ENCODE measurements at regions of chr7 and their contacts with region 1.

Region 1: DNA sequence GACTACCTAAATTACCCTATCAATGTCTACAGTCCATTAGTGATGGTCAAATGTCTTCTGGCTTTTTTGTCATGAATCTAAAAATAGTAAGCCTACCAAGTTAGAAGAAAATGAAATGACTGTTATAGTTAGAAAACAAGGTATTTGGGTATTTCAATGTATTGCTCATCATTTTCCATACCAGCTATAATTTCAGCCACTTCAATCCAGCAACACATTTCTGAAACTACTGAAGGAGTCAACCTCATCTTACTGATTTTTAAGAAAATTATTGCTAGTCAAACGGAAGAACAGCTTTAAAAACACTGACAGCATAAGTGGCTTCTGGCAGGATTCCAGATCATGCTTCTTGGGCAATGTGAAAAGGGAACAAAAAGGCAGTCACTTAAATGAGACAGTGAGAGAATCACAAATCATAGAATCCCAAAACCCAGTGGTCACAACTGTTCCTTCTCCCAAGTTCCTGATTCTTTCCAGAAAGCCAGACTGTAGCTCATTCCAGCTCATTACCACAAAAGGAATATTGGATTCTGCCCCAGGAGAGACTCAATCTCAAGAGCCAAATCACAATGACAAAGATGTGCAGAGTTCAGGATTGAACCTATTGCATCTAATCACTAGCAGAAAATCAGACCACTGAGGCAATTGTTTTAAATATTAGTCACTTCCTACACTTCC is 61.2 kb upstream of the LRRN3 start:
- DNase-seq: peak; percentile 20
- ATAC-seq: no peak
- H3K4me3 ChIP-seq: no peak overlapping the region; a peak in 1 of 6 replicates
- H3K27ac ChIP-seq: peak overlapping the region; percentile 67
- H3K4me1 ChIP-seq: peaks cover 62% of the 10 kb centered on the region
- H3K27me3 ChIP-seq: no peaks in the 10 kb centered on the region
- CTCF ChIP-seq: no peak
- EP300 ChIP-seq: no peak
- POLR2A ChIP-seq: no peak
- RAD21 ChIP-seq: no peak

Region 2: GRCh38 chr7:109663806-109664205 is 1365.9 kb before region 1 on chr7:
- CTCF ChIA-PET with region 1: no interaction called
- POLR2A ChIA-PET with region 1: no interaction called
- in situ Hi-C with region 1: no loop called
- intact Hi-C with region 1: loop called (anchors 5 kb)
- DNase-seq: no peak
- ATAC-seq: no peak
- H3K4me3 ChIP-seq: no peak overlapping the region
- H3K27ac ChIP-seq: no peak overlapping the region
- H3K4me1 ChIP-seq: no peaks in the 10 kb centered on the region
- H3K27me3 ChIP-seq: no peaks in the 10 kb centered on the region
- CTCF ChIP-seq: no peak
- EP300 ChIP-seq: no peak
- POLR2A ChIP-seq: no peak
- RAD21 ChIP-seq: no peak

Region 3: GRCh38 chr7:110522761-110523244 is 506.9 kb before region 1 on chr7:
- CTCF ChIA-PET with region 1: no interaction called
- POLR2A ChIA-PET with region 1: no interaction called
- in situ Hi-C with region 1: no loop called
- intact Hi-C with region 1: loop called (anchors 10 kb)
- DNase-seq: peak; percentile 96
- ATAC-seq: peak; percentile 99
- H3K4me3 ChIP-seq: peak overlapping the region in 2 of 3 experiments; percentile 2 to 3; a peak in 2 of 6 replicates
- H3K27ac ChIP-seq: peak overlapping the region; percentile 84
- H3K4me1 ChIP-seq: peaks cover 36% of the 10 kb centered on the region
- H3K27me3 ChIP-seq: no peaks in the 10 kb centered on the region
- CTCF ChIP-seq: no peak
- EP300 ChIP-seq: peak; percentile 71 to 93
- POLR2A ChIP-seq: no peak
- RAD21 ChIP-seq: no peak

Region 4: DNA sequence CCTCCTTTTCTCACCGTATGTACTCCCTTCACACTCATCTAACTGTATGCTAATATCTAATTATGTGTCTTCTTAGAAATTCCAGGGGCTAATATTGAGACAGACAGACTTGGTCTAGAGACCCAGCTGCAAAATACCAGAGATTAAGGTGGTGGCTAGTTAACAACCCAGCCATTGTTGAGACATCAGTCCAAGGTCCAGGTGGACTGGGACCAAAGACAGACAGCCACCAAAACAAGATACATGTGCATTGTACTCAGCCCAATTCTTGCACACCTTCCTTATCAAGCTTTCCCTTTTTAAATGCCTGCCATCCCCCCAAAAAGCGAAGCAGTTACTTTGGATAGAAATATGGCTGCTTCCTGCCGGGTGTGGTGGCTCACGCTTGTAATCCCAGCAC is 17.9 kb after region 1 on chr7:
- CTCF ChIA-PET with region 1: no interaction called
- POLR2A ChIA-PET with region 1: interaction called, 5 read pairs
- in situ Hi-C with region 1: no loop called
- intact Hi-C with region 1: loop called (anchors 2 kb)
- DNase-seq: peak; percentile 30
- ATAC-seq: peak; percentile 75
- H3K4me3 ChIP-seq: no peak overlapping the region
- H3K27ac ChIP-seq: no peak overlapping the region
- H3K4me1 ChIP-seq: peaks cover 16% of the 10 kb centered on the region
- H3K27me3 ChIP-seq: no peaks in the 10 kb centered on the region
- CTCF ChIP-seq: no peak
- EP300 ChIP-seq: 0 out of 4 replicates have a peak, but pooled peaks of 1 of the 2 experiments have one; percentile 19
- POLR2A ChIP-seq: no peak
- RAD21 ChIP-seq: no peak

Region 5: GRCh38 chr7:111074071-111074747 is 44.5 kb after region 1 on chr7:
- CTCF ChIA-PET with region 1: no interaction called
- POLR2A ChIA-PET with region 1: no interaction called
- in situ Hi-C with region 1: no loop called
- intact Hi-C with region 1: loop called (anchors 5 kb)
- DNase-seq: no peak
- ATAC-seq: no peak
- H3K4me3 ChIP-seq: no peak overlapping the region
- H3K27ac ChIP-seq: no peak overlapping the region
- H3K4me1 ChIP-seq: peaks cover 31% of the 10 kb centered on the region
- H3K27me3 ChIP-seq: no peaks in the 10 kb centered on the region
- CTCF ChIP-seq: no peak
- EP300 ChIP-seq: no peak
- POLR2A ChIP-seq: no peak
- RAD21 ChIP-seq: no peak

Measured in HepG2 (cell line).